ENCODE measurements at regions of chr2 and their contacts with region 1.

Region 1: DNA sequence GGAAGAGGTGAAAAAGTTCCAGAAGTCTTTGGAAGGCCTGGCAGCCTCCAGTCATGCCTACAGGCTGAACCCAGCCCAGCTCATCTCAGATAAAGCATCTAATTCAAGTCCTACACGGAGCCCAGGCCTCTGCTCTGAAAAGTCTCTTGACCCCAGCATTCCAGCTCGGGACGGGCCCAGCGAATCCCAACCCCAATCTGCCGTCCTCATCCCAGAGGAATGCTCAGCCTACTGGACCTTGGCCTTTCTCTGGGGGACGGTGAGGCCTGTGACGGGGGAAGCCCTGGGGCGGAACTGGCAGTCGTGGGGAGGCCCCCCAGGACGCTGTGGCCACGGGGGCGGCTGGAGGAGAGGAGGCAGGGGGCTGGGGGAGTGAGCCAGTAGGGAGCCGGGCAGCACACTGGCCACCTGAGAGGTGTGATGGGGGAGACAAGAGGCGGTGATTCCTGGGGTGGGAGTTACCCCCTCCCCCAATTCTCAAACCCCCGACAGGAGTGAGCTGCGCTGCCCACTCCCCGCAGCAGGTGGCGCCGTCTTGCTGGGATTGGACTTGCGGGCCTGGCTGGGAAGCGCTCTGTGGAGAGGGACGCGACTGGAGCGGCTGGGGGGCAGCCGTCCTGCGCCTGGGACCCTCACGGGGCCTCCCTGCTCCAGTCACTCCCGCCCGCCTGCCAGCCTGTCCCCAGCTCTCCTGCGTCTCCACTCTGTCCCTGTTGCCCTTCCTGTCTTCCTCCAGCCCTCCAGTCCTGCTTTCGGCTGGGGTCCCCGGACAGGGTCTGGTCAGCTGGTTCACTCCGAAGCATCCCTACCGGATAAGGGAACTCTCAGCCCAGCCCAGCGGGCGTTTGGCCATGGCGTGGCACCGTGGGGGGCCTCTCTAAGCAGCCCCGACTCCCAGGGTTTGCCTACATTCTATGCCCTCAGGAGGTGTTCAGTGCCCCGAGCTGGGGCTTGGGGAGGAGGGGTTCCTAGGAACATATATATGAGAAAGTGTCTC is 182.6 kb upstream of the HAAO start:
- ATAC-seq: peak; percentile 47 to 93 (median 88)
- H3K4me3 ChIP-seq: peak overlapping the region in 3 of 5 donors; percentile 8 to 13 (median 12)
- H3K27ac ChIP-seq: no peak overlapping the region
- H3K4me1 ChIP-seq: peaks cover 6 to 15% of the 10 kb centered on the region in 2 donors

Region 2: DNA sequence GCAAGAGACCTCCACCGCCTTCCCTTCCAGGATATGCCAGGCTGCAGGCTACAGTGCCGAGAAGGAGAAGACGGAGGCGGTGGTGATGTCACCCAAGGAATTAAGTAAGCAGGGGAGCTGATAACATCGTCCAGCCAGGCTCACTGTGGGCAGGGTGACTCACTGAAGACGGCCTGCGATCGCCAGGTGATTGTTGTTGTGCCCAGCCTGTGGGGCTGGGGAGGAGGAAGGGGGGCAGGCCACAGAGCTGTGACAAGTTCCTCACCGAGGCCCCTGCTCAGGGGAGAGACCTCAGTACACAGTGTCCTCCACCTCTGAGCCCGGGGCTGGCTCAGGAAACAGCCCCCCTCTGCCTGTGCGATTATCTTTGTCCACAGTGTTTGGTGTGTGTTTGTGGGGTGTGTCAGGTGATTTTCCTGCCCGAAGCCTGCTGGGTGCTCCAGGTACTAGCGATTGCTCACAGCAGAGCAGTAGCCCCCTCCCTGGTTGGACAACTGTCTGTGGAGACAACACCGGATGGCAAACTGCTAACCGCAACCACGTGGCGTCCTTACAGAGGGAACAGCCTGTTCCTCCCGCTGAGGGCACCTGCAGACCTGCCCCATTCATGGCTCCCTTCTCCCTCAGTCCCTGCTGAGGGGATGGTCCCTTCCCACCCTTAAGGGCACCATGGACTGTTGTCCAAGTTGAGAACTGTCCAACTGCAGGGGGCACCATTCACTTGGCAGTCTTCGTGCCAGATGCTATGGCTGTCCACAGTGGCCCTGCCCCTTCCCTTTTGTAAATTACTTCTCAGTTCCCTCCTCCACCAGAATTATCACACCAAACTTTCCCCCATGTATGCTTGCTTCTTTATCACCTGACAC is 156.2 kb after region 1 on chr2:
- in situ Hi-C with region 1: loop called in 1 of 9 experiments (anchors 10 kb)
- ATAC-seq: peak; percentile 14 to 95 (median 54)
- H3K4me3 ChIP-seq: no peak overlapping the region
- H3K27ac ChIP-seq: no peak overlapping the region
- H3K4me1 ChIP-seq: peaks cover 4 to 15% of the 10 kb centered on the region in 2 donors

Region 3: DNA sequence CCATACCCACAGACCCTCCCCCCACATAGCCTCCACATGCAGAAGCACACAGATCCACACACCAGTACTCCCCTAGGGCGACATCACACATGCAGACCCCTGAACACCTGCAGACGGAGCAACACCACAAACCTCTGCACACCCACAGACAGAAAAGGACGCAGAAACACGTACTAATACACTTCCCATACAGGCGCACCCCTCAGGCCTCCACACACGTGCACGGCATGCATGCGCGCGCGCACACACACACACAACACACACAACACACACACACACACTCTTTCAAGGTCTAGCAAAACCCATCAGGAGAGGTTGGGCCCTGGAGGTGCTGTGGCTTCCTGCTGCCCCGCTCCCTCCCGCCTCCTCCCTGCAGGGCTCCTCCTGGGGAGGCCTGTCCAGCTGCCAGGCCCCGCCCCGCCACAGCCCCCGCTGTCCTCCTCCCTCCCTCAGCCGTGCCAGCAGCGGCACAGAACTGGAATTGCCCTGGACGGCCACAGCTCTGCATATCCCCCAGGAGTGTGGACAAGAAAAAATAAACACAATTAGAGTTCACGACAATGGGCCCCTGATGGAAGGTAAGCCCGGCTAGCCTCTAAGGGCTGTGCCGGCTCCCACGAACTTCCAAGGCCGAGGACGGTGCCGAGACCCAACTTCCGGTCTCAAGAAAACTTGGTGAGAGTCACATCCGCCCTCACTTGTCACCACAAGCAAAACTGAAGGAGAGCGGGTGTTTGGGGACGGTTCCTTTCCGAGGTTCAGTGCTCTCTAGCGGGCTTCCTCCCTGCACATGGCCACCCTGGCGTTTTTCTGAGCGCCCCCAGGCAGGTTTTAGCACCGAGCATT is 244.6 kb after region 1 on chr2:
- in situ Hi-C with region 1: loop called in 2 of 9 experiments (anchors 10 to 25 kb)
- ATAC-seq: peak; percentile 39 to 58 (median 47)
- H3K4me3 ChIP-seq: peak overlapping the region in 3 of 5 donors; percentile 14 to 77 (median 60)
- H3K27ac ChIP-seq: peak overlapping the region; percentile 36 to 82
- H3K4me1 ChIP-seq: peaks cover 40 to 44% of the 10 kb centered on the region in 2 donors

Region 4: DNA sequence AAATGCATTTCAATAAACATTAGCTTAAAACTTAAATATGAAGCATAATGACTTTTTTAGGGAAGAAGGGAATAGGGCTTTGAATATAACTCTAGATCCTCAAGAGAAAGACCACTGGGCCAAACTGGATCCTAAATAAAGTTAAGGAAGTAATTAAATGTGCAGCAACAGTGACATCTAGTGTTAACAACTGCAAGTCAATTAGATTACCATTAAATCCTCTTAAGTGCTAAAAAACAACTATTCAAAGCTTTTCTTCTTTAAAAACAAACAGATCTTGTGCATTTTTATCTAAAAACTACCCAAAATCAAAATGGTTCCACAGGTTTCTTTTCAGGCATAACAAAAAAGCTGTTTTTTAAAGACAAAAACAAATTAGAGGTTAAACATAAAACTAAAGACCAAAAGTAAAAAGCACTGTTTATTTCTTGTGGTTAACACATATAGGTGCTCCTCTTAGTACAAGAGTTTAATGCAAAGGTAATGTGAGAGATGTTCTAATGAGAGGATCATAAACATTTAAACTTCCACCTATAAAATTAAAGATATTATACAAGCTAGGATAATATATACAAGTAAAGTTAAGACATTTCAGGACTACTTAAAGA is 509.4 kb after region 1 on chr2:
- in situ Hi-C with region 1: loop called in 5 of 9 experiments (anchors 25 kb)
- ATAC-seq: peak in 4 of 8 experiments; percentile 47 to 58 (median 52)
- H3K4me3 ChIP-seq: no peak overlapping the region
- H3K27ac ChIP-seq: no peak overlapping the region
- H3K4me1 ChIP-seq: peaks cover 0 to 3% of the 10 kb centered on the region in 2 donors

Measured in motor neuron (in vitro differentiated cells).